B cell (primary cell): ENCODE measurements at regions of chr1 and their contacts with region 1.

Region 1: GRCh38 chr1:107919953-107920352 is 45.0 kb downstream of the VAV3 start:
- DNase-seq: peak; percentile 19
- ATAC-seq: no peak
- H3K4me3 ChIP-seq: peak overlapping the region in 1 of 5 experiments; percentile 13
- H3K4me3 Mint-ChIP-seq: peak overlapping the region; percentile 66
- H3K27ac ChIP-seq: peak overlapping the region in 1 of 2 donors; percentile 47
- H3K27ac Mint-ChIP-seq: peak overlapping the region; percentile 56
- H3K4me1 ChIP-seq: peaks cover 22 to 38% of the 10 kb centered on the region in 2 donors
- H3K4me1 Mint-ChIP-seq: peaks cover 65% of the 10 kb centered on the region
- H3K27me3 ChIP-seq: no peaks in the 10 kb centered on the region
- H3K27me3 Mint-ChIP-seq: no peaks in the 10 kb centered on the region
- CTCF ChIP-seq: no peak

Region 2: GRCh38 chr1:107936498-107937481 is 16.8 kb after region 1 on chr1:
- CTCF ChIA-PET with region 1: interaction called, 4 read pairs
- POLR2A ChIA-PET with region 1: interaction called, 3 read pairs
- intact Hi-C with region 1: loop called (anchors 2 kb)
- DNase-seq: peak; percentile 42
- ATAC-seq: peak; percentile 54
- H3K4me3 ChIP-seq: no peak overlapping the region
- H3K4me3 Mint-ChIP-seq: peak overlapping the region; percentile 69
- H3K27ac ChIP-seq: peak overlapping the region in 1 of 2 donors; percentile 3
- H3K27ac Mint-ChIP-seq: peak overlapping the region; percentile 78
- H3K4me1 ChIP-seq: peaks cover 50 to 56% of the 10 kb centered on the region in 2 donors
- H3K4me1 Mint-ChIP-seq: peaks cover 81% of the 10 kb centered on the region
- H3K27me3 ChIP-seq: no peaks in the 10 kb centered on the region
- H3K27me3 Mint-ChIP-seq: no peaks in the 10 kb centered on the region
- CTCF ChIP-seq: no peak

Region 3: GRCh38 chr1:108609483-108610049 is 689.6 kb after region 1 on chr1:
- CTCF ChIA-PET with region 1: no interaction called
- POLR2A ChIA-PET with region 1: no interaction called
- intact Hi-C with region 1: no loop called
- DNase-seq: no peak
- ATAC-seq: no peak
- H3K4me3 ChIP-seq: no peak overlapping the region
- H3K4me3 Mint-ChIP-seq: no peak overlapping the region
- H3K27ac ChIP-seq: no peak overlapping the region
- H3K27ac Mint-ChIP-seq: no peak overlapping the region
- H3K4me1 ChIP-seq: no peaks in the 10 kb centered on the region
- H3K4me1 Mint-ChIP-seq: no peaks in the 10 kb centered on the region
- H3K27me3 ChIP-seq: no peaks in the 10 kb centered on the region
- H3K27me3 Mint-ChIP-seq: no peaks in the 10 kb centered on the region
- CTCF ChIP-seq: no peak